Activated B cell treated with CpG ODN at 0.5 μM for 24 hours (primary cell): ENCODE measurements at regions of chr20 and their contacts with region 1.

Region 1: GRCh38 chr20:63973636-63974402 is 4.1 kb upstream of the ZNF512B start:
- DNase-seq: peak; percentile 87
- ATAC-seq: peak; percentile 66
- H3K4me3 Mint-ChIP-seq: peak overlapping the region; percentile 8
- H3K27ac Mint-ChIP-seq: no peak overlapping the region
- H3K4me1 Mint-ChIP-seq: peaks cover 28% of the 10 kb centered on the region
- H3K27me3 Mint-ChIP-seq: no peaks in the 10 kb centered on the region
- CTCF ChIP-seq: peak; percentile 72

Region 2: DNA sequence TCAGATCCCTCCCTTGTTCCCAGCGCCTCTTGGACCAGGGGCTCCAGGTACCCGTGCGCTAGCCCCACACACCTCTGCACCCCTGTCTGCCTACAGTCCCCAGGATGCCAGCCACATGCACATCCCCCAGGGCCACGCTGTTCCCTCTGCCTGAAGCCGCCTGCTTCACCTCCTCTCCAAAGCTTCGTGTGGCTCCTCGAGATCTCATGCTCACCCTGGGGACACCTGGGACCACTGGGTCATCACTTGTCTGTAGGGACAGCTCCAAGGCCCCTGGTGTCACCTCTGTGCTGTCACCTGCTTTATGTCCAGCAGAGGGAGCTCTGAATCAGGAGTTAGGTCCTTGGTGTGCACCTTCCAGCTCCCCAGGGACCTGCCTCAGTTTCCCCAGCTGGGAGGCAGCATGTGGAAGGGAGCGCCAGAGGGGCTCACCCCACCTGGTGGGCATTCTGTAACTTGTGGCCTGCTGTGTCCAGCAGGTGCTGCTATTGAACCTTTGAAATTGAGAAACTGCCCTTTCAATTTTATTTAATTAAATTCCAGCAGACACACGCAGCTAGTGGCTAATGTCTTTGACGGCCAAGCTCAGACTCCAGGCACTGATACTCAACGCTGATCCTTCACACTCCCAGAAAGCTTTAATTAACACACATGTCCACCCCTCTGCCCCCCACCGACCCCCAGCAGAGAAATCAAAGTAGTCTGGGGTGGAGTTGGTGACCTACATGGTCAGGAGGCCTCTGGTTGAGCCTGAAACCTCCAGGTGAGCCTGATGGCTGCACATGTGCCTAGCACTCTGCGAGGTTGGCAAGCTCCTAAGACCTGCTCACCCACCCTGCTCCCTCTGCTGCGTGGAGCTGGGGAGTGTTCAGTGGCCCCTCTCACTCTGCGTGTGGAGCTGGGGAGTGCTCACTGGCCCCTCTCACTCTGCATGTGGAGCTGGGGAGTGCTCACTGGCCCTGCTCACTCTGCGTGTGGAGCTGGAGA is 750.3 kb before region 1 on chr20:
- CTCF ChIA-PET with region 1: interaction called, 4 read pairs
- POLR2A ChIA-PET with region 1: no interaction called
- intact Hi-C with region 1: loop called (anchors 5 kb)
- DNase-seq: no peak
- ATAC-seq: peak; percentile 65
- H3K4me3 Mint-ChIP-seq: no peak overlapping the region
- H3K27ac Mint-ChIP-seq: no peak overlapping the region
- H3K4me1 Mint-ChIP-seq: no peaks in the 10 kb centered on the region
- H3K27me3 Mint-ChIP-seq: peaks cover 11% of the 10 kb centered on the region
- CTCF ChIP-seq: peak; percentile 42

Region 3: GRCh38 chr20:63495741-63496595 is 477.9 kb before region 1 on chr20:
- CTCF ChIA-PET with region 1: interaction called, 12 read pairs
- POLR2A ChIA-PET with region 1: interaction called, 4 read pairs
- intact Hi-C with region 1: loop called (anchors 1 kb)
- DNase-seq: peak; percentile 73
- ATAC-seq: peak; percentile 74
- H3K4me3 Mint-ChIP-seq: peak overlapping the region; percentile 59
- H3K27ac Mint-ChIP-seq: no peak overlapping the region
- H3K4me1 Mint-ChIP-seq: peaks cover 4% of the 10 kb centered on the region
- H3K27me3 Mint-ChIP-seq: peaks cover 9% of the 10 kb centered on the region
- CTCF ChIP-seq: peak; percentile 58

Region 4: GRCh38 chr20:63641792-63642544 is 331.9 kb before region 1 on chr20:
- CTCF ChIA-PET with region 1: interaction called, 3 read pairs
- POLR2A ChIA-PET with region 1: interaction called, 8 read pairs
- intact Hi-C with region 1: loop called (anchors 2 kb)
- DNase-seq: peak; percentile 92
- ATAC-seq: peak; percentile 76
- H3K4me3 Mint-ChIP-seq: peak overlapping the region; percentile 78
- H3K27ac Mint-ChIP-seq: peak overlapping the region; percentile 71
- H3K4me1 Mint-ChIP-seq: peaks cover 35% of the 10 kb centered on the region
- H3K27me3 Mint-ChIP-seq: no peaks in the 10 kb centered on the region
- CTCF ChIP-seq: no peak

Region 5: GRCh38 chr20:63782051-63782471 is 191.8 kb before region 1 on chr20:
- CTCF ChIA-PET with region 1: interaction called, 13 read pairs
- POLR2A ChIA-PET with region 1: no interaction called
- intact Hi-C with region 1: loop called (anchors 1 kb)
- DNase-seq: no peak
- ATAC-seq: peak; percentile 33
- H3K4me3 Mint-ChIP-seq: no peak overlapping the region
- H3K27ac Mint-ChIP-seq: no peak overlapping the region
- H3K4me1 Mint-ChIP-seq: peaks cover 6% of the 10 kb centered on the region
- H3K27me3 Mint-ChIP-seq: no peaks in the 10 kb centered on the region
- CTCF ChIP-seq: no peak

Region 6: GRCh38 chr20:63955827-63956663 is 17.8 kb before region 1 on chr20 and contains the start of gene UCKL1:
- CTCF ChIA-PET with region 1: interaction called, 4 read pairs
- POLR2A ChIA-PET with region 1: interaction called, 6 read pairs
- intact Hi-C with region 1: loop called (anchors 1 kb)
- DNase-seq: peak; percentile 87
- ATAC-seq: peak; percentile 78
- H3K4me3 Mint-ChIP-seq: peak within 1 kb of the TSS; percentile 87
- H3K27ac Mint-ChIP-seq: peak within 1 kb of the TSS; percentile 85
- H3K4me1 Mint-ChIP-seq: peaks cover 49% of the 10 kb centered on the region
- H3K27me3 Mint-ChIP-seq: no peaks in the 10 kb centered on the region
- CTCF ChIP-seq: no peak
- total RNA-seq, gene UCKL1: 43.6 and 49.7 TPM in 2 replicates